B cell (primary cell): ENCODE measurements at regions of chr6 and their contacts with region 1.

Region 1: DNA sequence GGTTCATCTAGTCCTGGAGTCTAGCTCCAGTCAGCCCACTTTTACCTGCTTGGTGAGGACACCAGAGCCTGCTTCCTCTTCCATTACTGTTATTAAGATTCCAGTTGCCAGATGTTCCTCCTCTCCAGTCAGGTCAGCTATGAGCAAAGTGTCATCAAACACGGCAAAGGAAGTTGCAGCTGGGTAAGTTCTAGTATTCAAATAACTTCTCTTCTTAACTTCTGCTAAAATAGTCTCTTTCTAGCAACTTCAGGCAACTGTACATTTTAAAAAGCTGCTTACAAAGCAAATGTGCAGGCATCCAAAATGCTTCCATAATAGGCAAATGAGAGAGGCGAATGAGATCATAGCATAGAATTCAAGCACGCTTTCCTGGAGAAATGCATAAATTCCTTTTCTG is 18.4 kb upstream of the MRPS18A start:
- DNase-seq: peak; percentile 67
- ATAC-seq: peak; percentile 22
- H3K4me3 ChIP-seq: peak overlapping the region in 1 of 5 experiments; percentile 44
- H3K4me3 Mint-ChIP-seq: peak overlapping the region; percentile 74
- H3K27ac ChIP-seq: peak overlapping the region; percentile 50 to 52
- H3K27ac Mint-ChIP-seq: peak overlapping the region; percentile 87
- H3K4me1 ChIP-seq: peaks cover 46 to 60% of the 10 kb centered on the region in 2 donors
- H3K4me1 Mint-ChIP-seq: peaks cover 53% of the 10 kb centered on the region
- H3K27me3 ChIP-seq: peaks cover 0 to 9% (median 0%) of the 10 kb centered on the region in 4 experiments
- H3K27me3 Mint-ChIP-seq: peaks cover 7% of the 10 kb centered on the region
- CTCF ChIP-seq: no peak

Region 2: GRCh38 chr6:43657221-43657802 is 48.7 kb before region 1 on chr6:
- CTCF ChIA-PET with region 1: no interaction called
- POLR2A ChIA-PET with region 1: no interaction called
- intact Hi-C with region 1: no loop called
- DNase-seq: no peak
- ATAC-seq: no peak
- H3K4me3 ChIP-seq: no peak overlapping the region
- H3K4me3 Mint-ChIP-seq: no peak overlapping the region
- H3K27ac ChIP-seq: no peak overlapping the region
- H3K27ac Mint-ChIP-seq: no peak overlapping the region
- H3K4me1 ChIP-seq: no peaks in the 10 kb centered on the region
- H3K4me1 Mint-ChIP-seq: no peaks in the 10 kb centered on the region
- H3K27me3 ChIP-seq: no peaks in the 10 kb centered on the region
- H3K27me3 Mint-ChIP-seq: peaks cover 8% of the 10 kb centered on the region
- CTCF ChIP-seq: no peak

Region 3: DNA sequence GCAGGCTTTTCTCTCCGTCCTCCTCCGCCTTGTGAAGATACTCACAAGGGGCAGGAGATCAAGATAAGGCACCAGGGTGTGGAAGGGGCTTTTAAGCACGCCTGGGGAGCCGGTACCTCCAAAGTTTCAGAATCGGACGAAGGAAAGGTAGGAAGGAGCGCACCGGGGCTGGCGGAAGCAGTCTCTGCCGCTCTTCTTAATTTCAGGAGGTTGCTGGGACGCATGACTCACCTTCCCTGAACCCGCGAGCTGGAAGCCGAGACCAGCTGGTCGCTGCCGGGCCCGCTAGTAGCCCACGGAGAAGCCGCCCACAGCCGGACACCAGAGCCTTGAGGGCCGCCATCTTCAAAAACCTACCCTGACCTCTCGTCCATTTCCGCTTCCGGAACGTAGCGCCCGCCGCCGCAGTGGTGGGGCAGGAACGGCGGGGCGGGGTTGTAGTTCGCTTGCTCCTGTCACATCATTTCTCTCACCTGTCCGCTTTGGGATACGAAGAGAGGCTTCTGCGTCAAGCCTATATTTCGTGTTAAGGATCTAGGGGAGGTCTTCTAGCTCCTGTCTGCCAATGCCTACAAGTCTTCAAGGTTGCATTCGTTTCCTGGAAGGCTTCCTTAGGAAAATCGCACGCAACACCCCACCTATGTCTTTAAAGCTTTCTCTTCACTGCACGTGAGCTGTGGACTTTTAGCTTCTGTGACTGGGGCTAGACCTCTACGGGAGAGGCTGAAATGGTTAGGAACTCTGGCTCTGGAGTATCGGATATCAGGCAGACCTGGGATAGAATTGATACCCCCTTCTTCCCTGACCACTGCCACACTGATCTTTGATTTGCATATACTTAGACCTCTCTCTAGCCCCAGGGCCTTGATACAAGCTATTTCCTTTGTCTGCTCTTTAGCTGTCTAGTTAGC is 18.3 kb before region 1 on chr6 and contains the start of gene MRPS18A:
- CTCF ChIA-PET with region 1: interaction called, 3 read pairs
- POLR2A ChIA-PET with region 1: no interaction called
- intact Hi-C with region 1: loop called (anchors 2 kb)
- DNase-seq: peak; percentile 83
- ATAC-seq: peak; percentile 92
- H3K4me3 ChIP-seq: peak within 1 kb of the TSS; percentile 80 to 98 (median 96)
- H3K4me3 Mint-ChIP-seq: peak within 1 kb of the TSS; percentile 97
- H3K27ac ChIP-seq: peak within 1 kb of the TSS; percentile 76 to 90
- H3K27ac Mint-ChIP-seq: peak within 1 kb of the TSS; percentile 92
- H3K4me1 ChIP-seq: peaks cover 37 to 42% of the 10 kb centered on the region in 2 donors
- H3K4me1 Mint-ChIP-seq: peaks cover 48% of the 10 kb centered on the region
- H3K27me3 ChIP-seq: no peaks in the 10 kb centered on the region
- H3K27me3 Mint-ChIP-seq: no peaks in the 10 kb centered on the region
- CTCF ChIP-seq: no peak
- total RNA-seq, gene MRPS18A: 37.0 and 39.6 TPM in 2 replicates